HAP-1 (cell line): ENCODE measurements at regions of chr20 and their contacts with region 1.

Region 1: DNA sequence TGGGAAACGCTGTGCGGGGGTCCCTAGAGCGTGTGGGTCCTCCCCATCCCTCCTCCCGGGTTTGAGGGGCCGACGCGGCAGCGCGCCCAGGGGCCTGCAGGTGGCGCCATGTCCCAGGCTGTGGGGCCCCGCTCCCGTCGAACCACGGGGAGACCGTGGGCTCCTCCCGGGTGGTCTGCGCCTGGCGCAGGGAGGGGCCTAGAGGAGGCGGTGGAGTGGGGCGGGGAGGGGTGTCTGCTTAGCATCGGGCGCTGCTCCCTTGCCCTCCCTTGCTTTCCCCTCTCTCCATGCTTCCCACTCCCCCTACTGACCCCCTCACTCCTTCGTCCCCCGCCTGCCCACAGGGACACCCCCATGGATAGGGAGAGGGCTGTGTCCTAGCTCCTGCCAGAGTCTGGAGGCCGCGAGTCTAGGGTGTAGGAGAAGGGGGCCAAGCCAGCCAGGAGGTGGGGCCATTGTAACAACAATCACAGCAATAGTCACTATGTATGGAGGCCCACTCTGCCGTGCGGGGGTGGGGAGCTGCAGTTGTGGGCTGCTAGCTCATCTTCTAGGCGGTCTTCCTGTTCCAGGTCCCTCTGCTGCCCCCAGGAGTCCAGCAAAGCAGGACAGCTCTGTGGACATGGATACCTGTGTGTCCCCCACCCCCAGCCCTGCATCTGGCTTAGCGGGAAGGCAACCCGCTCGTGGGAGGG is 51.7 kb downstream of the CHMP4B start:
- DNase-seq: peak; percentile 30 to 80
- H3K4me3 ChIP-seq: peak overlapping the region; percentile 12; the same call in 1 of the 2 replicates
- H3K4me1 ChIP-seq: peaks cover 2% of the 10 kb centered on the region; the same call in 1 of the 2 replicates
- H3K27me3 ChIP-seq: no peaks in the 10 kb centered on the region

Region 2: DNA sequence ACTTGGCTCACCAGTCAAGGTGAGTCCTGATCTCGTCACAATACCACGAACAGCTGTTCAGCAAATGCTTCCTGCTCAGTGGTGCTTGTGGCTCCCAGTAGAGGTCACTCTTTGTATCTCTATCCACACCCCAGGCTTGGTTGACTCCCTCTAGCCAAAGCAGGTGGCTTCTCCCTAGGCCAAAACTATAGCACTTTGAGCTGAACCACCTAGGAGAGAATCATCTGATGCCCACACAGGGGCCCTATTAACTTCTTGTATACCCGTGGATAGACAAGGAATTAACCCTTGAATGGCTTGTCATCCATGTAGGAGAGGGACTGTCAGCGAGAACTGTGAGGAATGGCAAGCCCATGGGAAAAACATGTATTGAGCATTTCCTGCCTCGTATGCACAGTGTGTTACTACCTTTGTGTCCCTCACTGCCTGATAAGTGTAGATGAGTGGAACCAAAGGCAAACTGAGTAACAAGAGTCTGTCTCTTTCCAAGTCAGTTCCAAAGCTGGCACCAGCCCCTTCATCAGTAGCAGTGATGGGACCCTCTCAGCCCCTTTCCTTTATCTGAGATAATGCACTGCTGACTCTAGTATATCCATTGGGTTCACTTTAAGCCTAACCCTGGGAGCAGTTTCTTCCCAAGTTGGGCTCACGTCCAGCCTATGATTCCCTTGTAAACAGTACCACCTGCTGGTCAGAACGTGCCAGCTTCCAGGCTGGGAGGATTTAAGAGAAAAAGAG is 206.7 kb after region 1 on chr20:
- in situ Hi-C with region 1: loop called (anchors 25 kb)
- DNase-seq: peak; percentile 70 to 78
- H3K4me3 ChIP-seq: no peak overlapping the region
- H3K4me1 ChIP-seq: no peaks in the 10 kb centered on the region
- H3K27me3 ChIP-seq: no peaks in the 10 kb centered on the region

Region 3: GRCh38 chr20:34163307-34163706 is 300.5 kb after region 1 on chr20:
- in situ Hi-C with region 1: no loop called
- DNase-seq: no peak
- H3K4me3 ChIP-seq: no peak overlapping the region
- H3K4me1 ChIP-seq: no peaks in the 10 kb centered on the region
- H3K27me3 ChIP-seq: no peaks in the 10 kb centered on the region